HCT116 (cell line): ENCODE measurements at regions of chr11 and their contacts with region 1.

Region 1: GRCh38 chr11:17479284-17480214 is 2.9 kb upstream of the ABCC8 start:
- DNase-seq: peak; percentile 49
- ATAC-seq: peak; percentile 98
- H3K4me3 ChIP-seq: no peak overlapping the region
- H3K27ac ChIP-seq: no peak overlapping the region
- H3K4me1 ChIP-seq: peaks cover 0 to 10% of the 10 kb centered on the region in 2 experiments; a peak in 2 of 4 replicates
- H3K27me3 ChIP-seq: no peaks in the 10 kb centered on the region
- CTCF ChIP-seq: no peak
- POLR2A ChIP-seq: no peak
- RAD21 ChIP-seq: no peak

Region 2: DNA sequence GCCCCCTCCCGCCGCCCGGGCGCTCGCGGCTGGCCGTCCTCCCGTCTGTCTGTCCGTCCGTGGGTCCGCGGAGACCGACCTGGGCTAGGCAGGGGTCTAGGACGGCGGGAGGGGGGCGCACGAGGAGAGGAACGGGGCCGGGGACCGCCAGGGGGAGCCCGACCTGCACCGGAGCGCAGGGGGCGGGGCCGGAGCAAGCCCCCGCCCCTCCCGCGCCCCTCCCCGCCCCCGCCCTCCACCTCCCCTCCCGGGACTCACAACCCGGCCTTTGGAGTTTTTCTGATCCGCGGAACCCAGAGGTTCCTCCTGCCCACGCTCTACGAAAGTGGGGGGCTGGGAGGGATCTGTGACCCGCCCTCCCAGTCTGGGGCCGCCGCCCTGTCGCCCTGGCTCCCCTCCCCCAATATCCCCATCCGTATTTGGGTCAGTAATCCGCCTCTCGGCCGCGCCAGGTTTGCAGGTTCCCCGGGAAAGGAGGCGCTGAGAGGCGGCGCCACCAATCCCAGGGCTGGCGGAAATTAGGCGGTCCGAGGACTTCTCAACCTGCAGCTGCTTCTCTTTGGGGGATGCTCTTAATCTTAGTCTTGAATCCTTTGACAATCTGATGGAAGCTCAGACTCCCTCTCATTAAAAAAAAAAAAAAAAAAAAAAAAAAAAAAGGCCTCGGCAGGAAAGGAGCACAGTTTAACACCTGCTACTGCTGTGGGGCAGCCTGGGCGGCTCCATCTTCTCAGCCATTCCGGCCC is 90.2 kb before region 1 on chr11:
- CTCF ChIA-PET with region 1: interaction called, 9 read pairs
- POLR2A ChIA-PET with region 1: no interaction called
- RAD21 ChIA-PET with region 1: interaction called in 1 of 2 experiments, 4 read pairs
- intact Hi-C with region 1: loop called (anchors 1 kb)
- DNase-seq: peak; percentile 69
- ATAC-seq: peak; percentile 78
- H3K4me3 ChIP-seq: peak overlapping the region; percentile 58 to 63
- H3K27ac ChIP-seq: peak overlapping the region; percentile 46; the same call in 1 of the 2 replicates
- H3K4me1 ChIP-seq: peaks cover 0 to 19% of the 10 kb centered on the region in 2 experiments; a peak in 3 of 4 replicates
- H3K27me3 ChIP-seq: no peaks in the 10 kb centered on the region
- CTCF ChIP-seq: peak; percentile 35 to 56 (median 50)
- POLR2A ChIP-seq: no peak
- RAD21 ChIP-seq: no peak

Region 3: DNA sequence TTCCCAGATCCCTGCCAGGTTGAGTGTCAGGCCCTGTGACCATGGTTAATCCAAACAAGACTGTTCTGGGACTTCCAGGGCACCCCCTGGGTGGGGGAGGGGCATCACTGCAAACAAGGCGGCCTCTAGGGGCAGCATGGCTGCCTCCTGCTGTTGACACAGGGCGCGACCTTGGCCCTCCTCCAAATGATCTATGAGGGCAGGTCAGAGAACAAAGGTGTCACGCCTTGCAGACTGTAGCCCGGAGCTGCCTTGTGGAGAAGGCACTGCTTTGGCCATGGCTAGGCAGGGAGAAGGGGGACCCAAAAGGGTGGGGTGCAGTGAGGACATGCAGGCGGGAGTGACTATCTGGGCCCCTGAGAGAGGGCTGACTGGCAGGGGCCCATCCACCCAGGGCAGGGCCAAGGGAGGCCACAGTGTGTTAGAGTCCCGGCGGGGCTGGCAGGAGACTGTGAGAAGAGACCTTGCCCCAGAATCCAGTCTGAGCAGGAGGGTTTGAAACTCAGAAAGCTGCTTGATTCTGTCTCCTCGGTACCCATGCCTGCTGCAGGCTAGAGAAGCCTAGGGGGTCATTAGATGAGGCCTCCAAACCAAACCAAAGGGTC is 290.6 kb after region 1 on chr11:
- CTCF ChIA-PET with region 1: no interaction called
- POLR2A ChIA-PET with region 1: no interaction called
- RAD21 ChIA-PET with region 1: no interaction called
- intact Hi-C with region 1: no loop called
- DNase-seq: no peak
- ATAC-seq: peak; percentile 36; the same call in 1 of the 2 replicates
- H3K4me3 ChIP-seq: no peak overlapping the region
- H3K27ac ChIP-seq: no peak overlapping the region
- H3K4me1 ChIP-seq: peaks cover 3 to 6% of the 10 kb centered on the region in 2 experiments; a peak in 3 of 4 replicates
- H3K27me3 ChIP-seq: no peaks in the 10 kb centered on the region
- CTCF ChIP-seq: peak in 2 of 3 experiments; percentile 48 to 53; a peak in 4 of 6 replicates
- POLR2A ChIP-seq: no peak
- RAD21 ChIP-seq: no peak